ENCODE measurements at regions of chr3 and their contacts with region 1.

Region 1: GRCh38 chr3:8441969-8442559 is 59.6 kb upstream of the LMCD1 start:
- DNase-seq: peak in 1 of 5 donors; percentile 36
- ATAC-seq: peak in 3 of 4 donors; percentile 33 to 54 (median 45)
- H3K4me3 ChIP-seq: no peak overlapping the region
- H3K27ac ChIP-seq: peak overlapping the region in 2 of 12 donors; percentile 1 to 65
- H3K4me1 ChIP-seq: peaks cover 3 to 47% (median 32%) of the 10 kb centered on the region in 12 donors
- H3K27me3 ChIP-seq: no peaks in the 10 kb centered on the region
- CTCF ChIP-seq: peak; percentile 47 to 84 (median 78)
- POLR2A ChIP-seq: no peak

Region 2: DNA sequence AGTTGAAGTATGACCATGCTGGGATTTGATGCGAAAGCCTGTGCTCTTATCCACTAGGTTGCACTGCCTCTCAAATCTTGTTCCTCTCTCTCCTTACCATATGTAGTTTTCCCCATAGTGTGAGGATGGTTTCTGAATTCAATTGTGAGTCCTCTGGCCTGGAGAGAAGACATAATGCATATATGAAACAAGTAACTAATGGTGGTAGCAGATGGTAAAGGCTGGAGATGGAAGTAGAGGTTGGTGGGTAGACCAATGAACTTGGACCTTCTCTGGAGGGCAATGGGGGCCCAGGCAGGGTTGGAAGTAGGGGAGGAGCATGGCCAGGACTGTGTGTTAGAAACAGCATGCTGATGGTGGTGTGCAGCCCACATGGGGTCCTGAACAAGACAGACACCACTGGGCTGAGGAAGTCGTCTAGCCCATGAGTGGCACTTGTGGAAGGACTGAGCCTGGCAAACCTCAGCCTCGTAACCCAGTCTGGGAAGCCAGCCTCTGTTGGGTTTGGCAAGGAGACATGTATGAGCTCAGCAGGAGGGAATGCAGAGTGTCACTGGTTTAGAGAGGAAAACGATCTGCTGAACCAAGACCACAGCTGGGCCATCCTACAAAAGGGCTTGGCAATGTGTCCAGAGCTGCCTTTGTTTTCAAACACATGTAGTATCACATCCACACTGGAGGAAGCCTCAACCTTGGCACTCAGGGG is 41.0 kb after region 1 on chr3:
- intact Hi-C with region 1: loop called in 3 of 10 experiments (anchors 5 kb)
- DNase-seq: peak; percentile 72 to 86 (median 76)
- ATAC-seq: peak; percentile 87 to 94 (median 93)
- H3K4me3 ChIP-seq: no peak overlapping the region
- H3K27ac ChIP-seq: peak overlapping the region; percentile 7 to 75 (median 52)
- H3K4me1 ChIP-seq: peaks cover 0 to 50% (median 27%) of the 10 kb centered on the region in 12 donors
- H3K27me3 ChIP-seq: no peaks in the 10 kb centered on the region
- CTCF ChIP-seq: no peak
- POLR2A ChIP-seq: no peak

Region 3: GRCh38 chr3:8490079-8490552 is 48.1 kb after region 1 on chr3:
- intact Hi-C with region 1: loop called in 2 of 10 experiments (anchors 10 kb)
- DNase-seq: peak in 1 of 5 donors; percentile 32
- ATAC-seq: peak in 2 of 4 donors; percentile 45 to 55
- H3K4me3 ChIP-seq: no peak overlapping the region
- H3K27ac ChIP-seq: peak overlapping the region in 1 of 12 donors; percentile 18
- H3K4me1 ChIP-seq: peaks cover 0 to 35% (median 15%) of the 10 kb centered on the region in 12 donors
- H3K27me3 ChIP-seq: no peaks in the 10 kb centered on the region
- CTCF ChIP-seq: no peak
- POLR2A ChIP-seq: no peak

Region 4: GRCh38 chr3:8501371-8502131 is 59.5 kb after region 1 on chr3 and contains the start of gene LMCD1:
- intact Hi-C with region 1: loop called in 9 of 10 experiments (anchors 5 to 10 kb)
- DNase-seq: peak; percentile 97 to 98 (median 98)
- ATAC-seq: peak; percentile 97 to 99 (median 98)
- H3K4me3 ChIP-seq: peak within 1 kb of the TSS; percentile 35 to 73 (median 58)
- H3K27ac ChIP-seq: peak within 1 kb of the TSS; percentile 82 to 97 (median 93)
- H3K4me1 ChIP-seq: peaks cover 5 to 79% (median 58%) of the 10 kb centered on the region in 12 donors
- H3K27me3 ChIP-seq: no peaks in the 10 kb centered on the region
- CTCF ChIP-seq: peak in 9 of 12 donors; percentile 8 to 52 (median 37)
- POLR2A ChIP-seq: peak in 1 of 2 donors; percentile 89
- total RNA-seq, gene LMCD1: 36.8 to 382 (median 54.6) TPM

Region 5: GRCh38 chr3:8560366-8561007 is 118.4 kb after region 1 on chr3:
- intact Hi-C with region 1: loop called in 1 of 10 experiments (anchors 5 kb)
- DNase-seq: peak in 1 of 5 donors; percentile 70
- ATAC-seq: peak; percentile 44 to 77 (median 63)
- H3K4me3 ChIP-seq: no peak overlapping the region
- H3K27ac ChIP-seq: peak overlapping the region; percentile 9 to 87 (median 70)
- H3K4me1 ChIP-seq: peaks cover 6 to 76% (median 47%) of the 10 kb centered on the region in 12 donors
- H3K27me3 ChIP-seq: no peaks in the 10 kb centered on the region
- CTCF ChIP-seq: no peak
- POLR2A ChIP-seq: no peak

Region 6: GRCh38 chr3:8607234-8608040 is 165.4 kb after region 1 on chr3:
- intact Hi-C with region 1: loop called (anchors 1 to 5 kb)
- DNase-seq: peak in 4 of 5 donors; percentile 73 to 81 (median 76)
- ATAC-seq: peak; percentile 97 to 98 (median 98)
- H3K4me3 ChIP-seq: no peak overlapping the region
- H3K27ac ChIP-seq: peak overlapping the region in 3 of 12 donors; percentile 6 to 49 (median 40)
- H3K4me1 ChIP-seq: peaks cover 0 to 27% (median 20%) of the 10 kb centered on the region in 12 donors
- H3K27me3 ChIP-seq: no peaks in the 10 kb centered on the region
- CTCF ChIP-seq: peak; percentile 53 to 91 (median 82)
- POLR2A ChIP-seq: no peak

Region 7: DNA sequence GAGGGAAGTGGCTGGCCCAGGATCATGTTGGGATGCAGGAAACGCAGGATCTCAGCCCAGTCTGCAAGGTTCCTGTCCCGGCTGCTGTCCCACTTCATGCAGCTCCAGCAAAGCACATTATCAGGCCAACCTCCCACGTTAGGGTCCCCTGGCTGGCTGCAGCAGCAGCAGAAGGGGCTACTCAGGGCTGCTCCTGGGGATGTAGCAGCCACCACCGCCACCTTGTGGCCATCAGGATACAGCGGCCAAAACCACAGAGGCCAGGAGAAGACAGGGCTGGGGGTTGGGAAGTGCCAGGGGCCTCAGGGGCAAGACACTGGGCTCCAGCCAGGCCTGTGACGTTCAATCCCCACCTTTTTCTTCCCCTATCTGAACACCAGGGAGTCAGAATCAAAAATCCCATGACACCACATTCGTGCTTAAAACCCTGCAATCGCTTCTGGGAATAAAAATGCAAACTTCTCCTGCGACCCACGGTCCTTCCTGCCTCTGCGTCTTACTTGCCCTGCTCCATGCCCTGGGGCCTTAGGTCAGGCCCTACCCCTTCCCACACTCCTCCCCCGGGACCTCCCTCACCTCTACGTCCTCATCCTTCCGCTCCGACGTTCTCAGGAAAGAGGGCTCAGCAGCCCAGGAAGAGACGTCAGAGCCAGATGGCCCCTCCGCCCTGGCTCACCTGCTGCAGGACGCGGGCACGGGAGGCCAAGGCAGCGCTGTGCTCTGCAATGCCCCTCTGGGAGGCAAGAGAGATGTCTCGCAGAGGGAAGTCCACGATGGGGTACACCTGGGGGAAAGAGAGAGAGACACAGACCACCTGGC is 181.0 kb after region 1 on chr3:
- intact Hi-C with region 1: loop called (anchors 2 to 5 kb)
- DNase-seq: peak; percentile 63 to 79 (median 71)
- ATAC-seq: peak; percentile 65 to 92 (median 84)
- H3K4me3 ChIP-seq: peak overlapping the region in 2 of 12 donors; percentile 10 to 19
- H3K27ac ChIP-seq: peak overlapping the region in 1 of 12 donors; percentile 30
- H3K4me1 ChIP-seq: peaks cover 0 to 25% (median 12%) of the 10 kb centered on the region in 12 donors
- H3K27me3 ChIP-seq: no peaks in the 10 kb centered on the region
- CTCF ChIP-seq: peak; percentile 78 to 95 (median 88)
- POLR2A ChIP-seq: no peak

Region 8: DNA sequence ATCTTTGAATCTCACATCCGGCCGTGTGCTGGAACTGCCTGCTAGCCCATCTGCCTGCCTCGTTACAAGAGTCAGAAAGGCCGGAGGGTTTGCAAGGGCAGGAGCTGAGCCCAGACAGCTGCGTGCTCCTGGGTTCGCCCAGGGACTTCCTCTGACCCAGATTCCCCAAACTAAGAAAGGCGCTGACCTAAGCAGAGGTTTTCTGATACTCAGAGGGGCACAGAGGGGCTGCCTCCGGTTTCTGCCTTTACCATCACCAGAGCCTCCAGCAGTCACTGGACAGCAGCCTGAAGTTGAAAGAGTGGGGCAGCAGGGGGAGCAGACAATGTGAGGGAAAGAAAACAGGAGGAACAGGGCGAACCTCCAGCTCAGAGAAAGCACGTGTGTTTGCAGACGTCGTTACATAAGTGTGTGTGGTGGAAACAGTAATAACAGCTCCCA is 554.6 kb after region 1 on chr3:
- intact Hi-C with region 1: no loop called
- DNase-seq: peak in 4 of 5 donors; percentile 53 to 71 (median 62)
- ATAC-seq: peak; percentile 75 to 90 (median 88)
- H3K4me3 ChIP-seq: no peak overlapping the region
- H3K27ac ChIP-seq: peak overlapping the region in 6 of 12 donors; percentile 36 to 72 (median 58)
- H3K4me1 ChIP-seq: peaks cover 0 to 17% (median 9%) of the 10 kb centered on the region in 12 donors
- H3K27me3 ChIP-seq: no peaks in the 10 kb centered on the region
- CTCF ChIP-seq: peak in 11 of 12 donors; percentile 4 to 52 (median 32)
- POLR2A ChIP-seq: no peak

Measured in heart left ventricle (tissue), 16 donors.